PC-9 (cell line): ENCODE measurements at regions of chr2 and their contacts with region 1.

Region 1: GRCh38 chr2:20446917-20447436 is at the start of gene RHOB:
- DNase-seq: peak; percentile 96 to 98
- H3K4me3 ChIP-seq: peak within 1 kb of the TSS; percentile 97
- H3K27ac ChIP-seq: peak within 1 kb of the TSS; percentile 69
- H3K4me1 ChIP-seq: peaks cover 52% of the 10 kb centered on the region
- H3K27me3 ChIP-seq: no peaks in the 10 kb centered on the region
- CTCF ChIP-seq: no peak
- total RNA-seq, gene RHOB: 39.3 and 44.4 TPM in 2 replicates

Region 2: DNA sequence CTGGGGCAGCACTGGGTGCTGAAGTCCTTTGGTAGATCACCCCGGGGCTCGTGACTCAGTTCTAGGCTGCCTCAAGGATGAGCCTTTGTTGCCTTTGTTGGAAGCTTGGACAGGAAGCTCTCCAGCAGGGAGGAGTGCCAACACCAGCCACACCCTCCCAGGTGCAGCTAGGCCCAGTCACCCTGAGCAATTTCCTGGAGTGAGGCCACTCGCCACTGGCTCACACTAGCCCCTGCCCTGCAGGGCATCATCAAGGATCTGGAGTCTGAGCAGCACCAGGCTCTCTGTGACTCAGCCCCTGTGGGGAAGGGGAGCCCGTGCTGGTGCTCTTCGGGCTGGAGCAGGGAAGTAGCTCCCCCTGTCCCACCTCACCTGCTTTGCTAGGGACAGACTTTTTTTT is 215.3 kb before region 1 on chr2:
- CTCF ChIA-PET with region 1: no interaction called
- POLR2A ChIA-PET with region 1: interaction called, 23 read pairs
- intact Hi-C with region 1: no loop called
- DNase-seq: peak; percentile 96 to 100
- H3K4me3 ChIP-seq: no peak overlapping the region; the same call in 1 of the 2 replicates
- H3K27ac ChIP-seq: peak overlapping the region; percentile 99
- H3K4me1 ChIP-seq: peaks cover 61% of the 10 kb centered on the region
- H3K27me3 ChIP-seq: no peaks in the 10 kb centered on the region
- CTCF ChIP-seq: no peak

Region 3: GRCh38 chr2:20466417-20466911 is 19.5 kb after region 1 on chr2:
- CTCF ChIA-PET with region 1: interaction called, 5 read pairs
- POLR2A ChIA-PET with region 1: interaction called, 22 read pairs
- intact Hi-C with region 1: loop called (anchors 1 kb)
- DNase-seq: peak; percentile 48 to 92
- H3K4me3 ChIP-seq: peak overlapping the region; percentile 7; the same call in 1 of the 2 replicates
- H3K27ac ChIP-seq: peak overlapping the region; percentile 88
- H3K4me1 ChIP-seq: peaks cover 48% of the 10 kb centered on the region
- H3K27me3 ChIP-seq: no peaks in the 10 kb centered on the region
- CTCF ChIP-seq: no peak

Region 4: DNA sequence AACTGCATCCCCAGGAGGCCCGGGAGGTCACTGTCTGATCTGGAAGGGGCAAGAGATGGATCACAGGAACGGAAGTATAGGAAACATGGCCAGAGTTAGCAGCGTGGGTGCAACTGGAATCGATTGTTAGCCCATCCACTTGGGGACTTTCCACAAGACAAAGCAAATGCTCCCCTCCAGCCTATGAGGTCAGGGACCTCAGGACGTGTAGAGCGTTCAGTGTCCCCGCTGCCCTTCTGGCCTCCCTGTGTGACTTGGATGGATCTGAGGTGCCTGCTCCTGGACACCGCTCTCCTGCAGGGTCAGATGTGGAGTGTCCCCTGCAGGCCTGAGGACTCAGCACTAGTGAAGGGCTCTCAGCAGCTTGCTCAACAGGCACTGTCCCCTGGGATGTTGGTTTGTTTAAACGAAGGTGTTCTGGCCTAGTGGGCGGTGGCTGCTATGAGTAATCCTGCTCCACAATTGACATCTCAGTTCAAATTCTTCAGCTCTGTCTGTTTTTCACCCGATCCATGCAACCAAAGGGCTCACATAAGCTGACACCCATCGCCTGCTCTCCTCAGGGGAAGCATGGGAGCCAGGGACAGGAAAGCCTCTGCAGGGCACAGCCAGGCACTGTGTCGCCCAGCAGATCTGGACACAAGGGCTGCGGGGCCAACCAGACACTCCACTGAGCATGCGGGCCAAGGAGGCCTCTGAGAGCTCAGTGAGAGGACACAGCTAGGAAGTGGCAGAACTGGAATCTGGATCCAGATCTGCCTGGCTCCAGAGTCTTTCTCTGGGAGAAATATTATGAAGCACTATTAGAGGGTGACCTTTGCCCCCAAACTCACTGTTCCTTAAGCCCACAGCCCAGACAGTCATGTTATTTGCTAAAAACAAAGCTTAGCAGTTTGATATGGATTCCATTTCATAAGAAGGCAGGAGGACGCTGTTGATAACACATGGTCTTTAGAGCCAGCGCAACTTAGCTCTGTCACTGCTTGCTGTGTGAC is 78.4 kb after region 1 on chr2:
- CTCF ChIA-PET with region 1: no interaction called
- POLR2A ChIA-PET with region 1: interaction called, 16 read pairs
- intact Hi-C with region 1: loop called (anchors 1 kb)
- DNase-seq: peak; percentile 68 to 94
- H3K4me3 ChIP-seq: no peak overlapping the region
- H3K27ac ChIP-seq: peak overlapping the region; percentile 70
- H3K4me1 ChIP-seq: peaks cover 41% of the 10 kb centered on the region
- H3K27me3 ChIP-seq: no peaks in the 10 kb centered on the region
- CTCF ChIP-seq: no peak; the same call in 1 of the 2 replicates

Region 5: DNA sequence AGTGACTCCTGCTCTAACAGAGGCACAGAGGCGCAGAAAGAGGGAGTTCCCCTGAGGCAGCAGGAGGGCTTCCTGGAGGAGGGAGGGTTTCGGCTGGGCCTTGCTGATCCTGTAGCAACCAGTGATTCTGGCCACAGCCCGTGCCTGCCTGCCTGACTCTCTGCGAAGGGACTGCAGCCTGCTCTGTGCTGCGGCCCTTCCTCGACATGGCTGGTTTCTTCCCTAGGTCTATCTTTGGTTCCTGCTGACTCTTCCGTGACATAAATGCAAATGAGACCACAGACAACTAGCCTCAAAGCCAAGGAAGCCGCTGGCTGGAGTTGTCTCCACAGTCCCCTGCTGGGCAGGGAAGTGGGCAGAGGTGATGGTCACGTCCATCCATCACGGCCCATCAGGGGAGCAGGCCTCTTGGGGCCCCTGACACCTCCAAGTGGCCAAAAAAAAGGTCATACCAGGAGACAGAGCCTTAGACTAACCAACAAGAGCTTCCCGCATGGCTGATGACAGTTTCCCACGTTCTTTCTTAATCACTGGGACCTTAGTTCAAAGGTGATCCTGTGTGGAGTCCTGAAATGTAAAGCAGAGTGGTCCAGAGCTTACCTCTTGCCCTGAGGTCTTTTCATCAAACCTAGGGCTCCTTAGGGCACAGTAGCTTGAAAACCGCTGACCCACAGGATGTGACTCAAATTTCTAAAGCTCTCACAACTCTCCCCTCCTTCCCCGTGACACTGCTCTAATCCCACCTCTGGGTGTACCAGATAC is 148.6 kb after region 1 on chr2:
- CTCF ChIA-PET with region 1: interaction called, 10 read pairs
- POLR2A ChIA-PET with region 1: interaction called, 19 read pairs
- intact Hi-C with region 1: loop called (anchors 1 kb)
- DNase-seq: peak; percentile 25 to 92
- H3K4me3 ChIP-seq: peak overlapping the region; percentile 5; the same call in 1 of the 2 replicates
- H3K27ac ChIP-seq: peak overlapping the region; percentile 96
- H3K4me1 ChIP-seq: peaks cover 76% of the 10 kb centered on the region
- H3K27me3 ChIP-seq: no peaks in the 10 kb centered on the region
- CTCF ChIP-seq: no peak; the same call in 1 of the 2 replicates

Region 6: DNA sequence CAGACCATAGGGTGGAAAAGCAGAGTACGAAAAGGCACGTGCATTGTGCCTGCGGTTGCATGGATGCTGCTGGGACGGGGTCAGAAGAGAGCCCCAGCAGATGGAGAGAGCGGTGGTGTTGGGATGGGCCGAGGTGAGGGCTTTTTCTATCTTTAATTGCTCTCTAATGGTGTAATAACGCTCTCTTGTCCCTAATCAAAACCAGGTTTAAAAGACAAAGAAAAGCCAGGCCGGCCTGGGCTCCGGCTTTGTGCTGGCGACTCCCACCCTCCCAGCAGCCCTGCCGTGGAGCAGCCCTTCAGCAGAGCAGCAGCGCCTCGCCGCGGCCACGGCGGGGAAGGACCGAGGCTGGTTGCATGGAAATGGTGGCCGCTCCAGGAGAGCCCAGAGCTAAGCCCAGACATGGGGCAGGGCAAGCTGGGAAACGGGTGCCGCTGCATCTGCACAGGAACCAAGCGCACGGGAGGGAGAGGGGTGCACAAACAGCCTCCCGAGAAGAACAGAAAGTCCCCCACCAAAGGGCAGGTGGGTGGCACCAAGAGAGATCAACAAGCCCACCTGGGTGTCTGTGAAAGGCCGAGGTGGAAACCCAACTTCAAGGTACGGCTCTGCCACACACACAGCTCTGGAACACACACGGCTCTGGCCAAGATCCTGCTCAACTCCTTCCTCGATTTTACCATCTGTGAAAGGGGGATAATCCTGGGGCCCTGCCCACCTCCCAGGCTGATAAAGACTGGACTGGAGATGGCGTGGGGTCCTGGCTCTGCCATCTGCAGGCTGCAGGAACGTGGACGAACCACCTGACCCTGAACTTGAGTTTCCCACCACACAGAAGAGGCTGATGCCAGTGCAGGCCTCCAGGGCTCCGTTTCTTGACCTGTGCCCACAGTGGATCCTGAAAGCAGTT is 189.0 kb after region 1 on chr2:
- CTCF ChIA-PET with region 1: interaction called, 12 read pairs
- POLR2A ChIA-PET with region 1: interaction called, 52 read pairs
- intact Hi-C with region 1: loop called (anchors 1 kb)
- DNase-seq: peak; percentile 48 to 86
- H3K4me3 ChIP-seq: no peak overlapping the region
- H3K27ac ChIP-seq: no peak overlapping the region
- H3K4me1 ChIP-seq: peaks cover 37% of the 10 kb centered on the region
- H3K27me3 ChIP-seq: no peaks in the 10 kb centered on the region
- CTCF ChIP-seq: peak; percentile 96

Region 7: DNA sequence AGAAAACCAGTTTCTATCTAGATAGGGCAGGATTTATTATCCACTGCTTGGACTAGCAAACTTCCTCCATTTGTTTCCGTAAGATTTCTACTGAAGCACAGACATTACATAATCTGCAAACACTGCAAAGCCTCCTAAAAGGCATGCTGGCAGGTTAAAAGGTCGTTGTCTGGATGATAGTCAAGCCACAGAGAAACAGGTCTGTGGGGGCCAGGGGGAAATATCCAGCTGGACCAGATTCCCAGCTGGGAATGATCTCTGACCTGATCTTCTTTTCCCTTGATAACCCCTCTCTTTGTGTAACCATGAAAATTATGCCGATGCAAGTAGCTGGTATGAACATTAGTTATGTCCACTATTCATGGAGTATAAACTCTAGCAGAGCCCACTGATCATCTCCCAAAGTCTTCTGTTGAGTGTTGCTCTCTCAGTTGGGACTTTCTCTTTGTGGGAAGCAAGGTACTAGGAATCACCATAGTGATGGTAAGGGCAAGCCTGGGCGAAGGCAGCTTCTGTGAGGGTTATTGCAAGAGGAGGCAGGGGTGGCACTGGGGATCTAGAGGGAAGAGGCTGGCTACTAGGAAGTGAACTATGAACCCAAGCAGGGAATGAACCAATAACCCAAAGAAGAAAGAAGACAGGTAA is 281.3 kb after region 1 on chr2:
- CTCF ChIA-PET with region 1: no interaction called
- POLR2A ChIA-PET with region 1: no interaction called
- intact Hi-C with region 1: no loop called
- DNase-seq: no peak
- H3K4me3 ChIP-seq: no peak overlapping the region
- H3K27ac ChIP-seq: no peak overlapping the region
- H3K4me1 ChIP-seq: peaks cover 21% of the 10 kb centered on the region
- H3K27me3 ChIP-seq: no peaks in the 10 kb centered on the region
- CTCF ChIP-seq: no peak